Left ventricle myocardium inferior (tissue), 1 donor: ENCODE measurements at regions of chr7 and their contacts with region 1.

Region 1: GRCh38 chr7:99997545-99998137 is 17.8 kb upstream of the ZKSCAN1 start:
- DNase-seq: peak; percentile 55
- H3K4me3 ChIP-seq: peak overlapping the region; percentile 67
- H3K27ac ChIP-seq: peak overlapping the region; percentile 86
- H3K4me1 ChIP-seq: peaks cover 34% of the 10 kb centered on the region
- H3K27me3 ChIP-seq: no peaks in the 10 kb centered on the region
- CTCF ChIP-seq: peak; percentile 59

Region 2: GRCh38 chr7:100081535-100082102 is 84.0 kb after region 1 on chr7 and contains the start of gene ZNF3:
- intact Hi-C with region 1: loop called (anchors 10 kb)
- DNase-seq: peak; percentile 97
- H3K4me3 ChIP-seq: peak within 1 kb of the TSS; percentile 77
- H3K27ac ChIP-seq: peak within 1 kb of the TSS; percentile 87
- H3K4me1 ChIP-seq: peaks cover 48% of the 10 kb centered on the region
- H3K27me3 ChIP-seq: no peaks in the 10 kb centered on the region
- CTCF ChIP-seq: peak; percentile 97
- total RNA-seq, gene ZNF3: 12.9 TPM